ENCODE measurements at regions of chr11 and their contacts with region 1.

Region 1: GRCh38 chr11:62880803-62881578 is at the start of gene SLC3A2:
- DNase-seq: peak; percentile 80 to 86 (median 83)
- H3K4me3 ChIP-seq: peak within 1 kb of the TSS; percentile 93 to 97 (median 95)
- H3K4me3 Mint-ChIP-seq: peak within 1 kb of the TSS; percentile 100
- H3K27ac ChIP-seq: peak within 1 kb of the TSS; percentile 100
- H3K27ac Mint-ChIP-seq: peak within 1 kb of the TSS; percentile 98 to 100 (median 99)
- H3K4me1 ChIP-seq: peaks cover 31 to 41% of the 10 kb centered on the region in 2 donors
- H3K4me1 Mint-ChIP-seq: peaks cover 37% of the 10 kb centered on the region
- H3K27me3 ChIP-seq: no peaks in the 10 kb centered on the region
- H3K27me3 Mint-ChIP-seq: peaks cover 0 to 4% (median 3%) of the 10 kb centered on the region in 3 donors
- CTCF ChIP-seq: peak; percentile 85
- polyA plus RNA-seq, gene SLC3A2: 156 to 231 (median 189) TPM

Region 2: GRCh38 chr11:62841361-62842184 is 39.4 kb before region 1 on chr11:
- intact Hi-C with region 1: loop called in 1 of 2 experiments (anchors 2 kb)
- DNase-seq: peak; percentile 92 to 97 (median 94)
- H3K4me3 ChIP-seq: peak overlapping the region; percentile 62 to 98 (median 93)
- H3K4me3 Mint-ChIP-seq: no peak overlapping the region
- H3K27ac ChIP-seq: peak overlapping the region; percentile 97 to 99
- H3K27ac Mint-ChIP-seq: no peak overlapping the region
- H3K4me1 ChIP-seq: peaks cover 29 to 36% of the 10 kb centered on the region in 2 donors
- H3K4me1 Mint-ChIP-seq: peaks cover 20% of the 10 kb centered on the region
- H3K27me3 ChIP-seq: no peaks in the 10 kb centered on the region
- H3K27me3 Mint-ChIP-seq: no peaks in the 10 kb centered on the region
- CTCF ChIP-seq: no peak

Measured in CD14-positive monocyte (primary cell).